ENCODE measurements at regions of chrX and their contacts with region 1.

Region 1: DNA sequence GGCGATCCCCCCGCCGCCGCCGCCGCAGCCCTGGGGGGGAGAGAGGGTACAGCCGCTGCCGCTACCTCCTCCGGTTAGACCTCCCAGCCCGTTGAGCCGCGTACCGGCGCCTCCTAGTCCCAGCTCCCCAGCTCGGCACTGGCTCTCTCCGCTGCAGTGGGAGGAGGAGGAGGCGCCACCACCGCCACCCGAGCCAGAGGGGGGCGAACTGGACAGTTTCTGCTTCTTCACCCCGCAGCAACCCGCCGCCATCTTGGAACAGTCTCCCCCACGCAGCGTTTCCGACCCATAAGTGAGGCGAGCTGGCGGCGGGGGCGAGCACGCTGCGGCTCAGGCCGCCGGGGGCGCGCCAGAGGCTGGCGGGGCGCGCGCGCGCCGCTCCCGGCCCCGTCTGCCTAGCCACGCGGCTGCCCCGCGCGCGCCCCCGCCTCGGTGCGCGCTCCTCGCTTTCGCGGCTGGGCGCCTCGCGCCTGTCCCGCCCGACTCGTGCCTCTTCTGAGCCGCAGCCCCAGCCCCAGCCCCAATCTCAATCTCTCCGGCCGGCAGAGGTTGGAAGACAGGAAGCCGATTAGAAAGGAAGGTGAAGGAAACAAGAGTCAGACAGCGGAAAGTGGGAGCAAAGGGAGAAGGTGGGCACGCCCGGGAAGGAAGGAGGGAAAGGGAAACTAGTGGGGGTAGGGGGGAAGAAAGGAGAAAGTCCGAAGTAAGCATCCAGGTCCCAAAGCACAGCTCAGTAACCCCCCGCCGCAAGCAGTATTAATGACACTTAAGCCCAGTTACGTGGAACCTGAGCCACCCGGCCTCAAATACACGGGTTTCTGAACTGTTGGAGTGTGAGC is at the start of gene AMMECR1:
- DNase-seq: peak; percentile 65 to 91 (median 79)
- ATAC-seq: peak; percentile 86
- H3K4me3 ChIP-seq: peak within 1 kb of the TSS; percentile 75 to 94
- H3K4me3 Mint-ChIP-seq: peak within 1 kb of the TSS; percentile 89
- H3K27ac ChIP-seq: peak within 1 kb of the TSS; percentile 80 to 81
- H3K27ac Mint-ChIP-seq: peak within 1 kb of the TSS; percentile 93
- H3K4me1 ChIP-seq: peaks cover 30% of the 10 kb centered on the region
- H3K4me1 Mint-ChIP-seq: peaks cover 37% of the 10 kb centered on the region
- H3K27me3 ChIP-seq: no peaks in the 10 kb centered on the region
- H3K27me3 Mint-ChIP-seq: no peaks in the 10 kb centered on the region
- CTCF ChIP-seq: no peak
- total RNA-seq, gene AMMECR1: 5.1 to 6.5 TPM

Region 2: GRCh38 chrX:109732780-109733657 is 585.0 kb before region 1 on chrX and contains the start of gene ACSL4:
- CTCF ChIA-PET with region 1: no interaction called
- POLR2A ChIA-PET with region 1: interaction called, 7 read pairs
- intact Hi-C with region 1: loop called (anchors 1 to 2 kb)
- DNase-seq: peak; percentile 70 to 92 (median 84)
- ATAC-seq: peak; percentile 86
- H3K4me3 ChIP-seq: peak within 1 kb of the TSS; percentile 90 to 96
- H3K4me3 Mint-ChIP-seq: peak within 1 kb of the TSS; percentile 97
- H3K27ac ChIP-seq: peak within 1 kb of the TSS; percentile 80 to 86
- H3K27ac Mint-ChIP-seq: peak within 1 kb of the TSS; percentile 98
- H3K4me1 ChIP-seq: peaks cover 14% of the 10 kb centered on the region
- H3K4me1 Mint-ChIP-seq: peaks cover 34% of the 10 kb centered on the region
- H3K27me3 ChIP-seq: no peaks in the 10 kb centered on the region
- H3K27me3 Mint-ChIP-seq: no peaks in the 10 kb centered on the region
- CTCF ChIP-seq: no peak
- total RNA-seq, gene ACSL4: 17.2 to 18.6 TPM

Region 3: DNA sequence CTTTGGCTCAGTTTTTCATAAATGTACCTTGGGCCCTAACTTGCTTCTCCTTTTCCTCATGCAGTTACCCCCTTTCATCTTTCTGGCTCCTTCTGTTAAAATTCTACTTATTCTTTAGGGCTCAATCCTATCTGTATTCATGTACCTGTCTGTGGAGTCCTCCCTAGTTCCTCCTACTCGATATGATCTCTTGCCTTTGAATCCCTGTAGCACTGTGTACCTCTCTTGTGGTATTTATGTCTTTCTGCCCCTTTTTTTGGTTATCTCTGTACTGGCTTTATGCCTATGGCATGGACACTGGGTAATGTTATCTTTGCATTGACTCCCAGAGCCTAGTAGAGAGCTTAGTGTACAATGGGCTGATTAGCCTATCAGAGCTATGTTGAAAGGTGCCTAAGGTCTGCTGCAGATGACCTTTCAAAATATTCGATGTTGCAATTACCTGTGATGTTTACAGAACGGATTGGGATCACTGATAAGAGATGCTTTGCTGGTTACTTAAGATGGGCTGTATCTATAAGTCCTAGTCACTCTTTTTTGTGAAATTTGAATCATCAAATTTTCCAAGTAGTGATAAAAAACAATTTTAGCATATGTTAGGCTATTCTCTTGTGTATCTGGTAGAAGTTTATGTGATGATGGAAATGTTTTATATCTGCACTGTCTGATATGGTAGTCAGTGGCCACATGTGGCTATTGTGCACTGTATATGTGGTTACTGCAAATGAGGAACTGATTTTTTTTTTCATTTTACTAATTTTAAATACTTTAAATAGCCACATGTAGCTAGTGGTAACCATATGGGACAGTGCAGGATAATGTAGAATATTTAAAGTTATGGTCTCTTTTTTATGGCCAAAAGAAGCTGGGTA is 281.6 kb before region 1 on chrX:
- CTCF ChIA-PET with region 1: no interaction called
- POLR2A ChIA-PET with region 1: no interaction called
- intact Hi-C with region 1: no loop called
- DNase-seq: no peak
- ATAC-seq: no peak
- H3K4me3 ChIP-seq: no peak overlapping the region
- H3K4me3 Mint-ChIP-seq: no peak overlapping the region
- H3K27ac ChIP-seq: no peak overlapping the region
- H3K27ac Mint-ChIP-seq: no peak overlapping the region
- H3K4me1 ChIP-seq: no peaks in the 10 kb centered on the region
- H3K4me1 Mint-ChIP-seq: peaks cover 18% of the 10 kb centered on the region
- H3K27me3 ChIP-seq: no peaks in the 10 kb centered on the region
- H3K27me3 Mint-ChIP-seq: no peaks in the 10 kb centered on the region
- CTCF ChIP-seq: no peak

Region 4: GRCh38 chrX:110156167-110156754 is 161.8 kb before region 1 on chrX:
- CTCF ChIA-PET with region 1: interaction called, 12 read pairs
- POLR2A ChIA-PET with region 1: no interaction called
- intact Hi-C with region 1: no loop called
- DNase-seq: peak in 2 of 9 experiments; percentile 19 to 34
- ATAC-seq: no peak
- H3K4me3 ChIP-seq: no peak overlapping the region
- H3K4me3 Mint-ChIP-seq: no peak overlapping the region
- H3K27ac ChIP-seq: no peak overlapping the region
- H3K27ac Mint-ChIP-seq: no peak overlapping the region
- H3K4me1 ChIP-seq: no peaks in the 10 kb centered on the region
- H3K4me1 Mint-ChIP-seq: peaks cover 9% of the 10 kb centered on the region
- H3K27me3 ChIP-seq: no peaks in the 10 kb centered on the region
- H3K27me3 Mint-ChIP-seq: no peaks in the 10 kb centered on the region
- CTCF ChIP-seq: peak; percentile 58

Region 5: DNA sequence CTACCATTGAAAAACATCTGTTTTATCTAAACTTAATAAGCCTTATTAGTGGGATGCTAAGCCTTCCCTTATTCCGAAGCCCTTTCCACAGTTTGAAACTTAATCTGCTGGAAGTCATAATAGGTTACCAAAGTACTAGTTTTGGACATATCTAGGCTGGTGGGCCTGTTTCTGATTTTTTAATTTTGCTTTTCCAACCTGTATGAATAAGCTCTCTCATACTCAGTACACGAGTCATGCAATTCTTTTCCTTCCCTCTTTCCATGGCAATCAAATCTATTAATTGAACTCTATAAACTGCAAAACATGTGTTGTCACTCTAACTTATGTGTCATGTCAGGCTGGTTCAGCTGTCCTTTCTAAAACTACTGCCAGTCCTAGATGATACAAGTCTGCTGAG is 91.1 kb before region 1 on chrX:
- CTCF ChIA-PET with region 1: no interaction called
- POLR2A ChIA-PET with region 1: interaction called, 6 read pairs
- intact Hi-C with region 1: loop called (anchors 5 kb)
- DNase-seq: no peak
- ATAC-seq: no peak
- H3K4me3 ChIP-seq: no peak overlapping the region
- H3K4me3 Mint-ChIP-seq: no peak overlapping the region
- H3K27ac ChIP-seq: no peak overlapping the region
- H3K27ac Mint-ChIP-seq: peak overlapping the region; percentile 11
- H3K4me1 ChIP-seq: peaks cover 5% of the 10 kb centered on the region
- H3K4me1 Mint-ChIP-seq: peaks cover 37% of the 10 kb centered on the region
- H3K27me3 ChIP-seq: no peaks in the 10 kb centered on the region
- H3K27me3 Mint-ChIP-seq: no peaks in the 10 kb centered on the region
- CTCF ChIP-seq: no peak

Region 6: DNA sequence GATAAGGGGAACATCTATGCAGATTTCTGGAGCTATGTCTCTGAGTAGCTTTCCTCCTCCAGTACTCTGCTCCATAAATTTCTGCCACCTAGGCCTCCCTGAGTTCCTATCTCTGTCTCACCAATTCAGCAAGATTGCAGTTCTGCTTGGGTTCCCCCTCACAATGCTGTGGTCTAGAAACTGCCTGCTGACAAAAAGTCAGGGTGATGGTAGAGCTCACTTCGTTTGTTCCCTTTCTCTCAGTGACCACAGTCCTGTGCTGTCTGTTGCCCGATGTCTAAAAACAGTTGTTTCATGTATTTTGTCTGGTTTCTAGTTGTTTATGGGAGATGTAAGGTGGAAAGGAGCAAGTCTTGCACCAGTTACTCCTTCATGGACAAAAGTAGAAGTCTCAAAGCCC is 41.3 kb before region 1 on chrX:
- CTCF ChIA-PET with region 1: no interaction called
- POLR2A ChIA-PET with region 1: no interaction called
- intact Hi-C with region 1: loop called in 1 of 2 experiments (anchors 5 kb)
- DNase-seq: no peak
- ATAC-seq: no peak
- H3K4me3 ChIP-seq: no peak overlapping the region
- H3K4me3 Mint-ChIP-seq: no peak overlapping the region
- H3K27ac ChIP-seq: no peak overlapping the region
- H3K27ac Mint-ChIP-seq: no peak overlapping the region
- H3K4me1 ChIP-seq: no peaks in the 10 kb centered on the region
- H3K4me1 Mint-ChIP-seq: peaks cover 24% of the 10 kb centered on the region
- H3K27me3 ChIP-seq: no peaks in the 10 kb centered on the region
- H3K27me3 Mint-ChIP-seq: no peaks in the 10 kb centered on the region
- CTCF ChIP-seq: no peak

Region 7: DNA sequence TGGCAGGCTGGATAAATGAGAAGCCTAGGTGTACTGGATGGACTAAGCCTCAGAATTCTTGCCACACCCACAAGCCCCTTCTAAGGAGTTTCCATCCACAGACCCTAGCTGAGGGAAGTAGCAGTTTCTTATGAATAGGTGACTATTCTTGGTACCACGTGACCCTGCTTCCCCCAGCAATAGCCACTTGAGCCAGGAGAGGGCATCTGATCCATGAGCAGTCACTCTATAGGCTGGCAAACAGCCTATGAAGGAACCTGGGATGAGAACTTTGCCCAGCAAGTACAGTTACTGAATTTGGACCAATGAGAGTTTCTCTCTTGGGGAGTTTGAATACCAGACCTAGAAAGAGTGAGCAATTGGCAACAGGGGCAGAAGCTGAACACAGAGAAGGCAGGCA is 124.6 kb after region 1 on chrX:
- CTCF ChIA-PET with region 1: no interaction called
- POLR2A ChIA-PET with region 1: no interaction called
- intact Hi-C with region 1: no loop called
- DNase-seq: no peak
- ATAC-seq: no peak
- H3K4me3 ChIP-seq: no peak overlapping the region
- H3K4me3 Mint-ChIP-seq: no peak overlapping the region
- H3K27ac ChIP-seq: no peak overlapping the region
- H3K27ac Mint-ChIP-seq: no peak overlapping the region
- H3K4me1 ChIP-seq: no peaks in the 10 kb centered on the region
- H3K4me1 Mint-ChIP-seq: no peaks in the 10 kb centered on the region
- H3K27me3 ChIP-seq: no peaks in the 10 kb centered on the region
- H3K27me3 Mint-ChIP-seq: peaks cover 3% of the 10 kb centered on the region
- CTCF ChIP-seq: no peak

Region 8: DNA sequence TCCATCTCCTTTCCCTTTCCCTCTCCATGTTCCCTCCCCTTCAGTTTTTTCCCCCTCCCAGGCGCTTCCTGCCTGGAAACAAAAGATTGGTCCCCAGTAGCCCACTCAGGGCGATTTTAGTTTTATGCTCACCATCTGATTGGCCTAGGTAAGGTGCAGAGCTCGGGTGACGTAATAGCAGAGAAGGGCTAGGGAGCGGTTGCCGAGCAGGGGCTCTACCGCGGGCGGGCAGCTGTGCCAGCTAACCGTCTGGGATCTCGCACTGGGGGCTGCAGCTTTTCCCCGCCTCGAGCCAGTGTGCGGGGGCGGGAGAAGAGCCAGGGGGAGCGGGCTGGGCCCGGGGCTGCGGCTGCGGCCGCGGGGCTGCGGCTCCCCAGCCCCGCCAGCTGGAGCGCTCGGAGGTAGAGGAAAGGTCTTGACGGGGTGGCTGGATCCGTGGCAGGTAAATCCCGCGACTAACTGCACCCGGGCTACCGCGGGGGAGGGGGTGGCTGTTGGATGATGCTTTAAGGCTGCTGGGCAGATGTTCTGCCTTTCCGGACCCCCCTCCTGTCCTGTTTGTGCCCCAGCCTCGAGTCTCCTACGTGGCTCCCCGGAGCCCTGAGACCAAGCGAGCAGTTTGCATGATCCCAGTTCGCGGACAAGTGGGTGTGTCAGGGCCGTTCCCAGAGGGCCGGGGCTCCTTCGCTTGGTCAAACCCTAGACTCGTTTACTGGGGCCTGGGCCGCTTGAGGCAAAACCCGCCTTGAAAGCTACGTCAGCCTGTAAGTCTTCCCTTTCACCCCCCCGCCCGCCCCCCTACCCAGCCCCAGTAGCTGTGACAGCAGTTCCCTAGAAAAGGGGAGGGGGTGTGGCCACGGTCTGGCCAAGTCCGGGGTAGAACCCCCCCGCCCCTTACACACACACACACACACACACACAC is 778.2 kb after region 1 on chrX and contains the start of gene PAK3:
- CTCF ChIA-PET with region 1: no interaction called
- POLR2A ChIA-PET with region 1: no interaction called
- intact Hi-C with region 1: no loop called
- DNase-seq: peak in 5 of 9 experiments; percentile 11 to 62 (median 28)
- ATAC-seq: peak; percentile 64
- H3K4me3 ChIP-seq: peak within 1 kb of the TSS; percentile 33 to 42
- H3K4me3 Mint-ChIP-seq: peak within 1 kb of the TSS; percentile 84
- H3K27ac ChIP-seq: no peak within 1 kb of the TSS
- H3K27ac Mint-ChIP-seq: peak within 1 kb of the TSS; percentile 41
- H3K4me1 ChIP-seq: no peaks in the 10 kb centered on the region
- H3K4me1 Mint-ChIP-seq: peaks cover 15% of the 10 kb centered on the region
- H3K27me3 ChIP-seq: no peaks in the 10 kb centered on the region
- H3K27me3 Mint-ChIP-seq: peaks cover 15% of the 10 kb centered on the region
- CTCF ChIP-seq: no peak
- total RNA-seq, gene PAK3: 0.49 to 0.72 TPM